HepG2 (cell line): ENCODE measurements at regions of chr4 and their contacts with region 1.

Region 1: DNA sequence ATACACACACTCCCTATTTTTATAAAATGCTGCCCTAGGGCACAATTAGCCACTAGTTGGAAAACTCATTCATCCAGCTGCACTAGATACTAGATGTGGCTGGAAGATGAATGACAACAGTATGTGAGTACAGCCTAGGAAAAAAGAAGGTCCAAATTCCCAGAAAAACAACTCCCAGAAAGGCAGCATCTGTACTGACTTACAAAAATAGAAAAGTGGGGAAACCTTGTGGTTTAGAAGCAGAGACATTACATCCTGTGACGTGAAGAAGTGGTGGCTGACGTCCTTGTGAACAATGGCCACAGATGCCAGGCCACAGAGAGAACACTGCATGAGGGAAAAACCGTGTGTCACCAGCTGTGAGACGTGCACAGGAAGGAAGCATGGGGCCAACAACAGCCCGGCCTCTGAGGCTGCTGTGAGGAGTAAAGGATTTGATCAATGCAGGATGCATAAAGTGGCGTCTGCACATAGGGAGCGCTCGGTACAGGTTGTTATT is 81.2 kb downstream of the SPRY1 start:
- DNase-seq: peak; percentile 41
- ATAC-seq: peak; percentile 44
- H3K4me3 ChIP-seq: peak overlapping the region in 2 of 3 experiments; percentile 11 to 29; a peak in 2 of 6 replicates
- H3K27ac ChIP-seq: peak overlapping the region; percentile 89
- H3K4me1 ChIP-seq: peaks cover 67% of the 10 kb centered on the region
- H3K27me3 ChIP-seq: no peaks in the 10 kb centered on the region
- CTCF ChIP-seq: 0 out of 2 replicates have a peak, but pooled peaks have one; percentile 10
- EP300 ChIP-seq: no peak
- POLR2A ChIP-seq: 0 out of 4 replicates have a peak, but pooled peaks of 1 of the 2 experiments have one; percentile 25
- RAD21 ChIP-seq: no peak

Region 2: GRCh38 chr4:122170775-122171174 is 1307.0 kb before region 1 on chr4:
- CTCF ChIA-PET with region 1: no interaction called
- POLR2A ChIA-PET with region 1: no interaction called
- in situ Hi-C with region 1: no loop called
- intact Hi-C with region 1: no loop called
- DNase-seq: no peak
- ATAC-seq: no peak
- H3K4me3 ChIP-seq: no peak overlapping the region
- H3K27ac ChIP-seq: no peak overlapping the region
- H3K4me1 ChIP-seq: no peaks in the 10 kb centered on the region
- H3K27me3 ChIP-seq: no peaks in the 10 kb centered on the region
- CTCF ChIP-seq: no peak
- EP300 ChIP-seq: no peak
- POLR2A ChIP-seq: no peak
- RAD21 ChIP-seq: no peak

Region 3: DNA sequence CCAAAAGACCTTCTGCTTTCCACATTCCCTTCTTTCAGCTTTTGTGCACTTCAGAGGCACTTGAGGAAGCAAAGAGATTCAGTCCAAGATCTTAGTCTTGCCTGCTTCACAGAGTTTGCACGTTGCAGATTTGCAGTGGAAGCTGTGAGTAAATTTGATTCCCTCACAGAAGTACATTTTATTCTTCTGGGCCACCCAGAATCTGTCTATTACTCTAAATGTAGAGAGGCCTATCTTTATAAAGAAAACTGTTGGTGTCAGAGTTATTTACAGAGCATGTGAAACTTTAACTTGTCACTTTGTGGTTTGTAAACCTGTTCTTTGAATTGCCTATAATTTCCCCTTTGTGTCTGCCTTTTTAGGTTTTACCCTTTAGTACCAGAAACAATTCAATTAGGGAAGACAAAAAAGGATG is 65.7 kb before region 1 on chr4:
- CTCF ChIA-PET with region 1: no interaction called
- POLR2A ChIA-PET with region 1: interaction called, 15 read pairs
- in situ Hi-C with region 1: no loop called
- intact Hi-C with region 1: no loop called
- DNase-seq: no peak
- ATAC-seq: no peak
- H3K4me3 ChIP-seq: no peak overlapping the region
- H3K27ac ChIP-seq: peak overlapping the region; percentile 77
- H3K4me1 ChIP-seq: peaks cover 98% of the 10 kb centered on the region
- H3K27me3 ChIP-seq: no peaks in the 10 kb centered on the region
- CTCF ChIP-seq: no peak
- EP300 ChIP-seq: peak in 1 of 2 experiments; percentile 52; a peak in 1 of 4 replicates
- POLR2A ChIP-seq: no peak
- RAD21 ChIP-seq: no peak

Region 4: DNA sequence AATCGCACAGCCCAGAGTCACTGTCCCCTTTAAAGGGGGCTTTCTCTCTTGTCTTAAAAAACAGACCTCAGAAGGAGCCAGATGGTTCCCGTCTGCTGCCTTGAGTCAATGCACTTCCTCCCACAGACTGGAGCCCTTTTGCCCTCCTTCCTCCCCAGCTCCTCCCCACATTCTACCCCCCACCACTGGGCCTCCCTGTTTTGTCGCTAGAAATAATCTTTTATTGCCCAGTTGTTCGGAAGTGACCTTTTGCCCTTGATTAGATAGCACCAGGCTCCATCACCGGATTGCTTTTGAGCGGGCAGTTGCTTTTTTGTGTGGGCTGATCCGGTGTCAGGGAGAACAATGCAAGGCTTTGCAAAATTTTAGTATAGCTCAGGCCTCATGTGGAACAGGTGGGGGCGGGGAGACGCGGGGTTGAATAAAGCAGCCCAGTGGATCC is 33.4 kb before region 1 on chr4:
- CTCF ChIA-PET with region 1: no interaction called
- POLR2A ChIA-PET with region 1: interaction called, 8 read pairs
- in situ Hi-C with region 1: no loop called
- intact Hi-C with region 1: loop called (anchors 1 kb)
- DNase-seq: peak; percentile 93
- ATAC-seq: peak; percentile 89
- H3K4me3 ChIP-seq: peak overlapping the region in 2 of 3 experiments; percentile 18 to 43; a peak in 1 of 6 replicates
- H3K27ac ChIP-seq: peak overlapping the region; percentile 61
- H3K4me1 ChIP-seq: peaks cover 55% of the 10 kb centered on the region
- H3K27me3 ChIP-seq: no peaks in the 10 kb centered on the region
- CTCF ChIP-seq: no peak
- EP300 ChIP-seq: peak in 1 of 2 experiments; percentile 87; a peak in 2 of 4 replicates
- POLR2A ChIP-seq: no peak
- RAD21 ChIP-seq: no peak

Region 5: GRCh38 chr4:123505095-123506010 is 27.6 kb after region 1 on chr4:
- CTCF ChIA-PET with region 1: no interaction called
- POLR2A ChIA-PET with region 1: interaction called, 56 read pairs
- in situ Hi-C with region 1: no loop called
- intact Hi-C with region 1: loop called (anchors 1 kb)
- DNase-seq: peak; percentile 97
- ATAC-seq: peak; percentile 97
- H3K4me3 ChIP-seq: peak overlapping the region; percentile 43 to 65 (median 59)
- H3K27ac ChIP-seq: peak overlapping the region; percentile 97
- H3K4me1 ChIP-seq: peaks cover 48% of the 10 kb centered on the region
- H3K27me3 ChIP-seq: no peaks in the 10 kb centered on the region
- CTCF ChIP-seq: peak; percentile 43; the same call in 1 of the 2 replicates
- EP300 ChIP-seq: peak in 1 of 2 experiments; percentile 90; a peak in 2 of 4 replicates
- POLR2A ChIP-seq: peak; percentile 65 to 69; a peak in 3 of 4 replicates
- RAD21 ChIP-seq: peak; percentile 73

Region 6: GRCh38 chr4:123564758-123565346 is 87.1 kb after region 1 on chr4:
- CTCF ChIA-PET with region 1: interaction called, 3 read pairs
- POLR2A ChIA-PET with region 1: interaction called, 5 read pairs
- in situ Hi-C with region 1: no loop called
- intact Hi-C with region 1: loop called (anchors 2 kb)
- DNase-seq: peak; percentile 92
- ATAC-seq: peak; percentile 100
- H3K4me3 ChIP-seq: no peak overlapping the region
- H3K27ac ChIP-seq: no peak overlapping the region
- H3K4me1 ChIP-seq: peaks cover 35% of the 10 kb centered on the region
- H3K27me3 ChIP-seq: no peaks in the 10 kb centered on the region
- CTCF ChIP-seq: peak; percentile 92
- EP300 ChIP-seq: peak in 1 of 2 experiments; percentile 63; a peak in 2 of 4 replicates
- POLR2A ChIP-seq: no peak
- RAD21 ChIP-seq: peak; percentile 89

Region 7: GRCh38 chr4:123599920-123600810 is 122.4 kb after region 1 on chr4:
- CTCF ChIA-PET with region 1: no interaction called
- POLR2A ChIA-PET with region 1: no interaction called
- in situ Hi-C with region 1: no loop called
- intact Hi-C with region 1: loop called (anchors 1 kb)
- DNase-seq: peak; percentile 98
- ATAC-seq: peak; percentile 92
- H3K4me3 ChIP-seq: peak overlapping the region in 2 of 3 experiments; percentile 34 to 42; a peak in 2 of 6 replicates
- H3K27ac ChIP-seq: peak overlapping the region; percentile 78
- H3K4me1 ChIP-seq: peaks cover 42% of the 10 kb centered on the region
- H3K27me3 ChIP-seq: no peaks in the 10 kb centered on the region
- CTCF ChIP-seq: 0 out of 2 replicates have a peak, but pooled peaks have one; percentile 15
- EP300 ChIP-seq: peak; percentile 83 to 96; a peak in 3 of 4 replicates
- POLR2A ChIP-seq: peak in 1 of 2 experiments; percentile 69; a peak in 2 of 4 replicates
- RAD21 ChIP-seq: no peak

Region 8: DNA sequence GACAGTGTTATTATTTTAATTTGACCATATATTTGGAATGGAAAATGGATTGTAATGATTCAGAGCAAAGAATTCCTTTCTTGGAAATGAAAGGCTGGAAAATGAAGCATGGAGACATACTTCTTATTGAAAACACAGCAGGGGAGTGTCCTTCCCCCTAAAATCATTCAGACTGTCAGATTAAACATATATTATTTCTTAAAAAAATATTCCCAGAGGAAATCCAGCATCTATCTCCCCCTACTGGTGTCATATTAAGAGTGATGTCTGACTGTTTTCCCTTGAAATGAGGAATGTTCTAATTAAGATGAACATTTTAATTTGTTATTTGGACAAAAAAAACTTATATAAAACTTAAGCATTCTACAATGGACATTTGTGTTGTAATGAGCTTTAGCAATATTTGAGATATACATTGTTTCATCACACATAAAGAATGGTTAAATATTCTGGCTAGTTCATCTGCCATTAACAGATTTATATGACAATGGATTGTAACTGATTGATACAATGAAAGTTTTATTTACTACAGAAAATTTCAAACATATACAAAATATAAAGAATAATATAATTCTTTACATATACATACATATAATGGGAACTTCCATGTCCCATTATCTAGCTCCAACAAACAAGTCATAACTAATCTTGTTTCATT is 183.4 kb after region 1 on chr4:
- CTCF ChIA-PET with region 1: no interaction called
- POLR2A ChIA-PET with region 1: no interaction called
- in situ Hi-C with region 1: no loop called
- intact Hi-C with region 1: loop called (anchors 1 kb)
- DNase-seq: no peak
- ATAC-seq: no peak
- H3K4me3 ChIP-seq: no peak overlapping the region
- H3K27ac ChIP-seq: no peak overlapping the region
- H3K4me1 ChIP-seq: peaks cover 30% of the 10 kb centered on the region
- H3K27me3 ChIP-seq: no peaks in the 10 kb centered on the region
- CTCF ChIP-seq: peak; percentile 36; the same call in 1 of the 2 replicates
- EP300 ChIP-seq: no peak
- POLR2A ChIP-seq: no peak
- RAD21 ChIP-seq: peak; percentile 47; the same call in 1 of the 2 replicates

Region 9: DNA sequence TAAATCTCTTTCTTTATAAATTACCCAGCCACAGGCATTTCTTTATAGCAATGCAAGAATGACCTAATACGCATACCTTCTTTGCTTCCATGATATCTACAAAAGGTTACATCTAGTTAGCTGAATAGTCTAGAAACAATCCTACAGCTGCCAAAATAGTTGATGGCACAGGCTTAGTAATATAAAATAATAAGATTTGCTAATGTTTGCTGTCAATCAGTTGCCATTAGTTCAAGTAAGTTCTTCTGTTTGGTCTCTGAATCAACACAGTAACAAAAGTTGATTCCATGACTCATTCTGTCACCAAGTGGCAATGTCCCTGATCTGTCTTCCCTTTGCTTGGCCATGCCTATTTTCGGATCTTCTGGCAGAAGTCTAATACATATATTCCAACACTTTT is 389.0 kb after region 1 on chr4:
- CTCF ChIA-PET with region 1: no interaction called
- POLR2A ChIA-PET with region 1: no interaction called
- in situ Hi-C with region 1: no loop called
- intact Hi-C with region 1: no loop called
- DNase-seq: peak; percentile 16
- ATAC-seq: no peak
- H3K4me3 ChIP-seq: no peak overlapping the region
- H3K27ac ChIP-seq: no peak overlapping the region
- H3K4me1 ChIP-seq: peaks cover 56% of the 10 kb centered on the region
- H3K27me3 ChIP-seq: no peaks in the 10 kb centered on the region
- CTCF ChIP-seq: no peak
- EP300 ChIP-seq: no peak
- POLR2A ChIP-seq: no peak
- RAD21 ChIP-seq: no peak

Region 10: DNA sequence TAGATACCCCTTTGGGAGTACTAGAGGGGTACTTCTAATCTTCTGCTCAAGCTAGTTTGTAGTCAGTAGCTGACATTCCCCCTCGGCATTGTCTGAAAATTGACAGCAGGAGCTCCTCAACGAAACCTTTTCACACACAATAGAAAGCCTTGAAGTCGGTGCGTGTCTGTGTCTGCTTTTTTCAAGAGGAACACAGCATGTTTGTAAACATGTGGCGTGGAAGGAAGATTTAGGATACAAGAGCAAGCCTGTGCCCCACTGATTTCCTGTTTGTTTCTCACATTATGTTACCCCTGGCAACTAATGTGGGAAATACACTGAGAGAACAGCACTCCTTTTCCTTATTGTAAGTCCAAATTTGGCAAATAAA is 982.2 kb after region 1 on chr4:
- CTCF ChIA-PET with region 1: no interaction called
- POLR2A ChIA-PET with region 1: no interaction called
- in situ Hi-C with region 1: no loop called
- intact Hi-C with region 1: no loop called
- DNase-seq: no peak
- ATAC-seq: no peak
- H3K4me3 ChIP-seq: no peak overlapping the region
- H3K27ac ChIP-seq: no peak overlapping the region
- H3K4me1 ChIP-seq: no peaks in the 10 kb centered on the region
- H3K27me3 ChIP-seq: no peaks in the 10 kb centered on the region
- CTCF ChIP-seq: no peak
- EP300 ChIP-seq: no peak
- POLR2A ChIP-seq: no peak
- RAD21 ChIP-seq: no peak